ENCODE measurements at regions of chr11 and their contacts with region 1.

Region 1: GRCh38 chr11:74449369-74449931 is 17.9 kb downstream of the KCNE3 start:
- DNase-seq: peak; percentile 55
- H3K4me3 ChIP-seq: no peak overlapping the region
- H3K27ac ChIP-seq: no peak overlapping the region
- H3K27me3 ChIP-seq: peaks cover 7% of the 10 kb centered on the region
- CTCF ChIP-seq: peak; percentile 82

Region 2: DNA sequence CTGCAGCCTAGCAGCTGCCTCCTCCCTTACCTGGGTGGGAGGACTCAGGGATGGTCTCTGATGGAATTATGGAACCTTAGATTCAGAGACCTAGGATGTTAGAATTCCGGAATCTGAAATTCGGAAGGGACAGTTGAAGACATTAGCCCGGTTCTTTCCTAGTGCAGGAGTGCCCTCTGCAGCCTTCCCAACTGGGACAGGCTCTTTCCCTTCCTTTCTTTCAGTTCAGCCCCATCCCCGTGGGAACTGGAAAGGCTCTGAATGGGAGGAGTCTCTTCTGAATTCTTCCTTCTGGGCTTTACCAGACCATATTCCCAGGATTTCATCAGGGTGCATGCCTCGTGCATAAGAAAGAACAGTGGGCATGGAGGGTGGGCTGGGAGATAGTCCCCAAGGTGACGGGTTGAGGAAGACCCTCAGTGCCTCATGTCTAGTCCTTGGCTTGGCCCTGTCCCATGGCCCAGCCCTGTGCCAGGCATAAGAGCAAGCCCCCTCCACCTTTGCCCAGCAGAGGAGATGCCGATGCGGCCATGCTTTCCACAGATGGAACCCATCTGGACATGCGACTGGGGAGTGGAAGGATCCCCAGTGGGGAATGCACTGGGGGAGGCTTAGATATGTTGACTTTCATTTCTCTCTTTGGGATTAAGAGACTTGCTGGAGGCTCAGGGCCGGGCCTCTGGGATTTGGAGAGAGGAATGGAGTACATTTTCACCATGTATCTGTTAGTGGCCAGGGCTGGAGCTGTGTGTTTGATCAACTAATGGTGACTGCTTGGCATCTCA is 484.2 kb before region 1 on chr11:
- CTCF ChIA-PET with region 1: interaction called, 10 read pairs
- POLR2A ChIA-PET with region 1: no interaction called
- DNase-seq: no peak
- H3K4me3 ChIP-seq: no peak overlapping the region
- H3K27ac ChIP-seq: no peak overlapping the region
- H3K27me3 ChIP-seq: peaks cover 8% of the 10 kb centered on the region
- CTCF ChIP-seq: 0 out of 2 replicates have a peak, but pooled peaks have one; percentile 7

Region 3: GRCh38 chr11:74388678-74389327 is 60.6 kb before region 1 on chr11:
- CTCF ChIA-PET with region 1: interaction called, 61 read pairs
- POLR2A ChIA-PET with region 1: no interaction called
- DNase-seq: no peak
- H3K4me3 ChIP-seq: no peak overlapping the region
- H3K27ac ChIP-seq: no peak overlapping the region
- H3K27me3 ChIP-seq: no peaks in the 10 kb centered on the region
- CTCF ChIP-seq: peak; percentile 84

Region 4: DNA sequence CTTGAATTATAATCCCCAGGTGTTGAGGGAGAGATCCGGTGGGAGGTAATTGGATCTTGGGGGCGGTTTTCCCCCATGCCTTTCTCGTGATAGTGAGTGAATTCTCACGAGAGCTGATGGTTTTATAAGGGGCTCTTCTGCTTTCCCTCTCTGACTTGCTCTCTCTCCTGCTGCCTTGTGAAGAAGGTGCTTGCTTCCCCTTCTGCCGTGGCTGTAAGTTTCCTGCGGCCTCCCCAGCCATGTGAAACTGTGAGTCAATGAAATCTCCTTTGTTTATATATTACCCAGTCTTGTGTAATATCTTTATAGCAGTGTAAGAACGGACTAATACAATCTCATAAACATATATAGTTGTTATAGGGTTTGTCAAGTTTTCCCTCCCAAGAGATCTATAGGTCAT is 14.9 kb before region 1 on chr11:
- CTCF ChIA-PET with region 1: interaction called, 32 read pairs
- POLR2A ChIA-PET with region 1: no interaction called
- DNase-seq: no peak
- H3K4me3 ChIP-seq: no peak overlapping the region
- H3K27ac ChIP-seq: no peak overlapping the region
- H3K27me3 ChIP-seq: no peaks in the 10 kb centered on the region
- CTCF ChIP-seq: no peak

Region 5: GRCh38 chr11:74570266-74571061 is 121.0 kb after region 1 on chr11:
- CTCF ChIA-PET with region 1: interaction called, 186 read pairs
- POLR2A ChIA-PET with region 1: no interaction called
- DNase-seq: no peak
- H3K4me3 ChIP-seq: no peak overlapping the region
- H3K27ac ChIP-seq: no peak overlapping the region
- H3K27me3 ChIP-seq: peaks cover 12% of the 10 kb centered on the region
- CTCF ChIP-seq: peak; percentile 75

Region 6: DNA sequence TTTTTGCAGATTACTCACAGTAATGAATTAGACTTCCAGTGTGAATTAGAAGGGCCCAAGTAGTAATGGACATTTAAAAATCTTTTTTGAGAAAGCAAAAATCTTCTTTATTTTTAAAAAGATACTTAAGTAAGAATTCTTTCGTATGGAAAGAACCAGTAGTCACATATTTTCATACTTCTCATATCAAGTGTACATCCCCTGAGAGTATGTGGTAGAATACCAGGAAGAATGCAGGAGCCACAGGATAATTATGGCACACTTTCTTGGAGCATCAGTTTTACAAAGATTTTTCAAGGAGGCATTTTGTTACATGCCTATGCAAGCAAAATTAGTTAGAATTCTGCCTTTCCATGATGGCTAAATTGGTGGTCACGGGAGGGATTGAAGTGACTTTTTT is 171.1 kb after region 1 on chr11:
- CTCF ChIA-PET with region 1: no interaction called
- POLR2A ChIA-PET with region 1: no interaction called
- DNase-seq: no peak
- H3K4me3 ChIP-seq: no peak overlapping the region
- H3K27ac ChIP-seq: no peak overlapping the region
- H3K27me3 ChIP-seq: no peaks in the 10 kb centered on the region
- CTCF ChIP-seq: no peak

Region 7: DNA sequence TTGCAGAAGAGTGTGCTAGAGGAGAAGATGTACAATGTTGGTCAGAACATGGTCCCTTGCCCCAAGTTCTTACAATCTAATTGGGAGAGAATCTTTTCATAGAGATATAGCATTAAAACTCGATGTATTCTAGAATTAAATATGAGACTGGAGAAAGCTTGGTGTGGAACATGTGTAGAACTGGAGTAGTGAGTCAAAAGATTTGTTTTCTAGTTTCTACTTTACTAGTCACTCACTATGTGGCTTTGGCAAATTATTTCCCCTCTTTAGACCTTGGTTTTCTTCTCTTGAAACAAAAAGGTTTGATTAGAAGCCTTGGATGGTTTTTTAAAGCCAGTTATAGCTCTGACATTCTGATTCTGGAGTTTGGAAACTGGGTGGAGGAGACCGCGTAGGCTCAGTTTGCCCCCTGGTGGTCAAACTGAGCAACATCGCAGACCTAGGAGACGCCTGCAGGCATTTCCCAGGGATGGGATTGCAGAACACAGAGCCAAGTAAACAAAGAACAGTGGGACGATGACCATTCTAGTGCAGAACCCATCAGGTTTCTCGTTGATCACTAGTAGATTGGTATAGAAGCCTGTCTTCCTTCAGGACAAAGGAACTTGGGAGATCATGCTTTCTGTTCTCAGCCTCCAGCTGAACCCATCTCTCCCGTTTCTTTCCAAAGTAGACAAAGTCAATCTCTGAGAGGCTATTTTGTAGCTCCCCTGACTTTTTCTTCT is 290.3 kb after region 1 on chr11:
- CTCF ChIA-PET with region 1: interaction called, 42 read pairs
- POLR2A ChIA-PET with region 1: no interaction called
- DNase-seq: peak; percentile 44
- H3K4me3 ChIP-seq: no peak overlapping the region
- H3K27ac ChIP-seq: no peak overlapping the region
- H3K27me3 ChIP-seq: peaks cover 4% of the 10 kb centered on the region
- CTCF ChIP-seq: peak; percentile 90

Measured in AG04450 (cell line).